ENCODE measurements at regions of chr7 and their contacts with region 1.

Region 1: GRCh38 chr7:141533149-141533949 is 17.9 kb upstream of the AGK start:
- DNase-seq: peak; percentile 76
- H3K4me3 Mint-ChIP-seq: no peak overlapping the region
- H3K27ac Mint-ChIP-seq: no peak overlapping the region
- H3K4me1 Mint-ChIP-seq: peaks cover 2% of the 10 kb centered on the region
- H3K27me3 Mint-ChIP-seq: peaks cover 35% of the 10 kb centered on the region

Region 2: GRCh38 chr7:140517546-140518369 is 1015.6 kb before region 1 on chr7:
- CTCF ChIA-PET with region 1: no interaction called
- intact Hi-C with region 1: loop called (anchors 1 kb)
- DNase-seq: peak; percentile 86
- H3K4me3 Mint-ChIP-seq: no peak overlapping the region
- H3K27ac Mint-ChIP-seq: no peak overlapping the region
- H3K4me1 Mint-ChIP-seq: peaks cover 5% of the 10 kb centered on the region
- H3K27me3 Mint-ChIP-seq: no peaks in the 10 kb centered on the region

Region 3: DNA sequence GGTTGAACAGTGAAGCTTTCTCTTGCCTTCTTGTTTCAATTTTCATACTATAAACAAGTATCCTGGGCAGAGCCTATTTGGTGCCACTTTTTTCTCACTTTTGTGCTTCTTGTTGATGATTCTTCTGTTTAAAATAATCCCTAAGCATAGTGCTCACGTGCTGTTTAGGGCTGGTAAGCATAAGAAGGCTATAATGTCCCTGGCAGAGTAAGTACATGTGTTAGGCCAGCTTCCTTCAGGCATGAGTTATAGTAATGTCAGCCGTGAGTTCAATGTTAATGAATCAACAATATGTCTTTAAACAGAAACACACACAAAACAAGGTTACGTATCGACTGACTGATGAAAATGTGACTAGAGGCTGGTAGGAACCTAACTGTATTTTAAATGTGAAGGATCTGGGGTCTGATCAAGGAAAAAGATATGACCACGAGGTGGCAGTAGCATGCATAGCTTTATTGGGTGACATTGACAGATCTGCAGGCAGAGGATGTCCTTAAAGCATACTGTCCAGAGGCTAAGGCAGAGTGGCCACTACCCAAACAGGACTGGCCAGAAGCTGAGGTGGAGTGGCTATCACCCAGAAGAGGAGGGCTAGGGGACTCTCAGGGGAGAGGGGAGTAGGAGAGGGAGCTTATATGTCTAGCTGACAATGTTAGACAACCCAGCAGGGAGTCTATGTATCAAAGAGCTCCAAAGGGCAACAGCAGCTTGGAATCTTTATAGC is 722.4 kb before region 1 on chr7:
- CTCF ChIA-PET with region 1: no interaction called
- intact Hi-C with region 1: loop called (anchors 5 kb)
- DNase-seq: peak; percentile 78
- H3K4me3 Mint-ChIP-seq: no peak overlapping the region
- H3K27ac Mint-ChIP-seq: no peak overlapping the region
- H3K4me1 Mint-ChIP-seq: peaks cover 2% of the 10 kb centered on the region
- H3K27me3 Mint-ChIP-seq: no peaks in the 10 kb centered on the region

Region 4: GRCh38 chr7:141072548-141073172 is 460.7 kb before region 1 on chr7:
- CTCF ChIA-PET with region 1: interaction called, 8 read pairs
- intact Hi-C with region 1: loop called (anchors 2 kb)
- DNase-seq: peak; percentile 54
- H3K4me3 Mint-ChIP-seq: peak overlapping the region; percentile 64
- H3K27ac Mint-ChIP-seq: no peak overlapping the region
- H3K4me1 Mint-ChIP-seq: peaks cover 15% of the 10 kb centered on the region
- H3K27me3 Mint-ChIP-seq: peaks cover 53% of the 10 kb centered on the region

Region 5: GRCh38 chr7:141301544-141301943 is 231.8 kb before region 1 on chr7:
- CTCF ChIA-PET with region 1: no interaction called
- intact Hi-C with region 1: no loop called
- DNase-seq: no peak
- H3K4me3 Mint-ChIP-seq: no peak overlapping the region
- H3K27ac Mint-ChIP-seq: no peak overlapping the region
- H3K4me1 Mint-ChIP-seq: no peaks in the 10 kb centered on the region
- H3K27me3 Mint-ChIP-seq: peaks cover 4% of the 10 kb centered on the region

Region 6: GRCh38 chr7:141519623-141520022 is 13.7 kb before region 1 on chr7:
- CTCF ChIA-PET with region 1: interaction called, 12 read pairs
- intact Hi-C with region 1: no loop called
- DNase-seq: no peak
- H3K4me3 Mint-ChIP-seq: no peak overlapping the region
- H3K27ac Mint-ChIP-seq: no peak overlapping the region
- H3K4me1 Mint-ChIP-seq: no peaks in the 10 kb centered on the region
- H3K27me3 Mint-ChIP-seq: peaks cover 18% of the 10 kb centered on the region

Region 7: DNA sequence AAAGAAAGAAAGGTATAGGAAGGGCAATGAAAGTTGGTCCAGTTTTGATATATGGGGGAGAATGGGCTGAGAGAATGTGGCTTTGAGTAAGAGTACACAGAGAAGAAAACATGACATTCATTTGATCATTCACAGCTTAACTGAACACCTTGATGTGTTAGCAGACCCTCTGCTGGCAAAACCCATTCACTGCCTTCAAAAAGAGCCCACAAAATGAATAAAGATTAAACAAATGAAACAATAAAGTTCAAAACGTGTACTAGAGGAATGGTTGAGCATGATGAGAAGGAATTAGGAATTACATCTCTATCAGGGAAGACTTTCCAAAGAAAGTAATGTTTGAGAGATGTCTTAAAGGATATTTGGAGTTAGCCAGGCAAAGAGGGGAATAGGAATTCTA is 177.0 kb after region 1 on chr7:
- CTCF ChIA-PET with region 1: no interaction called
- intact Hi-C with region 1: no loop called
- DNase-seq: no peak
- H3K4me3 Mint-ChIP-seq: no peak overlapping the region
- H3K27ac Mint-ChIP-seq: no peak overlapping the region
- H3K4me1 Mint-ChIP-seq: peaks cover 4% of the 10 kb centered on the region
- H3K27me3 Mint-ChIP-seq: no peaks in the 10 kb centered on the region